AG04449 (cell line): ENCODE measurements at regions of chr15 and their contacts with region 1.

Region 1: DNA sequence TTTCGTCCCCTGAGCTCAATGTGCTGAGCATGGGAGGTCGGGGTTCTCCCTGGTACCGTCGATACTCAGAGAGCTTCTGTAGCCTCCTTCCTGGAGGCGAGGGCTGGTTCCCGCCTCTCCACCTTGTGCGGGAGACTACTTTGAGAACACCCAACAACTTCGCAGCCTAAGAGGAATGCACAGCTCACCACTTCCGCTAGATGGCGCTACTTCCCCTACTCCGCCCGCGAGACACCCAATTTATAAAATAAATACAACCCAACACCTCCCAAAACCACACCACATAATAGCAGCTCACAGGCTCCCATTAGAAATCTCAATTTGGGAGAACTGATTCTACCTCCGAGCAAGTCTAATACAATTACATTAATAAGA is 1.2 kb downstream of the RGMA start:
- DNase-seq: no peak
- H3K4me3 ChIP-seq: no peak overlapping the region
- CTCF ChIP-seq: peak; percentile 76

Region 2: GRCh38 chr15:93072411-93073394 is 15.1 kb before region 1 on chr15:
- CTCF ChIA-PET with region 1: interaction called, 31 read pairs
- POLR2A ChIA-PET with region 1: no interaction called
- DNase-seq: no peak
- H3K4me3 ChIP-seq: peak overlapping the region; percentile 72
- CTCF ChIP-seq: no peak

Region 3: GRCh38 chr15:93102211-93102610 is 14.4 kb after region 1 on chr15:
- CTCF ChIA-PET with region 1: interaction called, 13 read pairs
- POLR2A ChIA-PET with region 1: no interaction called
- DNase-seq: no peak
- H3K4me3 ChIP-seq: no peak overlapping the region
- CTCF ChIP-seq: no peak